ENCODE measurements at regions of chr6 and their contacts with region 1.

Region 1: DNA sequence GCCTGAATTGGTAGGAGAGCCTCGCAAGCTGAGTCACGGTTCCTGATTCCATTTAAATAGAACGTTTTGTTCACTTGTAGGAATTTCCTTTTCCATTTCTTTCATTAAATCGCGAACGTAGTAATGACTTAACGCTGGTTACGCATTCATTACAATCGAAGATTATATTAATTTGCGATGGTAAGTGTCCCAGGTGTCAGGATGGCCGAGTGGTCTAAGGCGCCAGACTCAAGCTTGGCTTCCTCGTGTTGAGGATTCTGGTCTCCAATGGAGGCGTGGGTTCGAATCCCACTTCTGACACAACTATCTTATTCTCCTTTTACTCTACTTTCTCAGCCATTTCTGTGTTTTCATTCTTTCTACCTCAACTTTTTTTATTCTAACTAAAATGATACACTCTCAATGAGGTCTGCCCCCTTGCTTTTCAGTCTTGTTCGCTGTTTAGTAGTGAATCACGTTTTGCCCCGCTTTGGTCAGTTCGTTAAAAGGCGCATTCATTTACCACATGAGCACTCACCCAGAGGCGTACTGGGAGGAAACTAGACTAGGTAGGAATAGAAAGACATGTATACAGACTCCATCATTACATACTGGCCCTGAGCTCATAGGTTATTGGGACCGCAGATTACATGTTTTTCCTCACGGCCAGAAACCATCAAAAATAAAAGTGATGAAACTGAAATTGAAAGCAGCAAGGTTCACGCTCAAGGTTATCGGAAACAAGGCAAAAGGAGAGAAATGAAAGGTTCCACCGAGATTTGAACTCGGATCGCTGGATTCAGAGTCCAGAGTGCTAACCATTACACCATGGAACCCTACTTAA is 17.3 kb upstream of the TRIM27 start:
- DNase-seq: peak; percentile 90
- H3K4me3 ChIP-seq: peak overlapping the region; percentile 46 to 61 (median 53)
- H3K27ac ChIP-seq: peak overlapping the region; percentile 66 to 84 (median 78)
- H3K4me1 ChIP-seq: peaks cover 0 to 24% (median 15%) of the 10 kb centered on the region in 4 donors
- H3K27me3 ChIP-seq: no peaks in the 10 kb centered on the region
- CTCF ChIP-seq: no peak
- EP300 ChIP-seq: no peak
- POLR2A ChIP-seq: no peak

Region 2: GRCh38 chr6:27687154-27688013 is 1253.7 kb before region 1 on chr6:
- intact Hi-C with region 1: loop called (anchors 5 kb)
- DNase-seq: peak; percentile 79
- H3K4me3 ChIP-seq: peak overlapping the region; percentile 34 to 50 (median 42)
- H3K27ac ChIP-seq: peak overlapping the region; percentile 32 to 63 (median 55)
- H3K4me1 ChIP-seq: peaks cover 0 to 16% (median 3%) of the 10 kb centered on the region in 4 donors
- H3K27me3 ChIP-seq: peaks cover 0 to 10% (median 7%) of the 10 kb centered on the region in 3 donors
- CTCF ChIP-seq: peak in 3 of 4 experiments; percentile 22 to 52 (median 25)
- EP300 ChIP-seq: no peak
- POLR2A ChIP-seq: no peak

Region 3: GRCh38 chr6:28789553-28790083 is 151.5 kb before region 1 on chr6:
- intact Hi-C with region 1: no loop called
- DNase-seq: no peak
- H3K4me3 ChIP-seq: peak overlapping the region in 1 of 4 donors; percentile 3
- H3K27ac ChIP-seq: no peak overlapping the region
- H3K4me1 ChIP-seq: peaks cover 0 to 12% (median 2%) of the 10 kb centered on the region in 4 donors
- H3K27me3 ChIP-seq: peaks cover 22 to 100% (median 91%) of the 10 kb centered on the region in 3 donors
- CTCF ChIP-seq: no peak
- EP300 ChIP-seq: no peak
- POLR2A ChIP-seq: no peak

Region 4: DNA sequence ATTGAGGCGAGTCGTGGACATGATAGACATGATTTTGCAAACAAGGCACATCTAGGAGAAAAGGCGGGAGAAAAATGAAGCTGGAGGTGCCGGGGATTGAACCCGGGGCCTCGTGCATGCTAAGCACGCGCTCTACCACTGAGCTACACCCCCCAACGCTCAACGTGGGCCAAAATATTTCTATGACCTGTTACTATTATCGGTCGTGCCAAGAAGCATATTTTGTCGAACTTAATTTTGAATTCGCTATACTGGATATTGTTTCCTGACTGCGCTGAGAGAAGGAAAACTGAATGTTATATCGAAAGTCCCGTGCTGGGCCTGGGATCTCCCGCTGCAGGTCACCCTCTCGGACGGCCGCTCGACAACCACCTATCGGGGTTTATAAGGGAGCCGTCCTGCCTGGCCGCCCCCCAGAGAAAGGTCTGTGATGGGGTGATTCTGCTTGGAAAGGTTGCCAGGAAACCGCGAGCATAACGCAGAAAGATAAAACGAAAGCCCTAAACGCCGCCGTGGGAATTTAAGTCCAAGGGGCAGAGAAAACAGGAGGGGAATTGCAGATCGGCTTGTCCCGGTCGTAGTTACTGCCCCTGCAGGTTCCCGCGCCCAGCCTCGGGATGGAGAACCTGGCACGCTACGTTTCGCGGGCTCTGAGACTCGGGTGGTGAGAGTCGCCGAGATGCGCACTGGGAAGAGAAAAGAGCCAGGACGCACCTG is 77.3 kb before region 1 on chr6:
- intact Hi-C with region 1: loop called (anchors 2 kb)
- DNase-seq: peak; percentile 86
- H3K4me3 ChIP-seq: peak overlapping the region; percentile 62 to 73 (median 67)
- H3K27ac ChIP-seq: peak overlapping the region; percentile 71 to 81 (median 79)
- H3K4me1 ChIP-seq: peaks cover 0 to 21% (median 10%) of the 10 kb centered on the region in 4 donors
- H3K27me3 ChIP-seq: no peaks in the 10 kb centered on the region
- CTCF ChIP-seq: no peak
- EP300 ChIP-seq: no peak
- POLR2A ChIP-seq: no peak

Region 5: GRCh38 chr6:28923318-28924102 is 17.6 kb before region 1 on chr6 and contains the start of gene TRIM27:
- intact Hi-C with region 1: loop called (anchors 2 kb)
- DNase-seq: peak; percentile 94
- H3K4me3 ChIP-seq: peak within 1 kb of the TSS; percentile 67 to 83 (median 80)
- H3K27ac ChIP-seq: peak within 1 kb of the TSS; percentile 92 to 97 (median 94)
- H3K4me1 ChIP-seq: peaks cover 0 to 37% (median 19%) of the 10 kb centered on the region in 4 donors
- H3K27me3 ChIP-seq: no peaks in the 10 kb centered on the region
- CTCF ChIP-seq: no peak
- EP300 ChIP-seq: no peak
- POLR2A ChIP-seq: peak; percentile 80 to 81
- total RNA-seq, gene TRIM27: 31.9 to 40.0 (median 36.1) TPM

Measured in sigmoid colon (tissue), 7 donors.